HAP-1 (cell line): ENCODE measurements at regions of chr20 and their contacts with region 1.

Region 1: GRCh38 chr20:43187476-43188233 is 2.1 kb downstream of the PTPRT start:
- DNase-seq: peak; percentile 19 to 77
- H3K4me3 ChIP-seq: no peak overlapping the region
- H3K4me1 ChIP-seq: no peaks in the 10 kb centered on the region
- H3K27me3 ChIP-seq: peaks cover 8% of the 10 kb centered on the region; the same call in 1 of the 2 replicates

Region 2: DNA sequence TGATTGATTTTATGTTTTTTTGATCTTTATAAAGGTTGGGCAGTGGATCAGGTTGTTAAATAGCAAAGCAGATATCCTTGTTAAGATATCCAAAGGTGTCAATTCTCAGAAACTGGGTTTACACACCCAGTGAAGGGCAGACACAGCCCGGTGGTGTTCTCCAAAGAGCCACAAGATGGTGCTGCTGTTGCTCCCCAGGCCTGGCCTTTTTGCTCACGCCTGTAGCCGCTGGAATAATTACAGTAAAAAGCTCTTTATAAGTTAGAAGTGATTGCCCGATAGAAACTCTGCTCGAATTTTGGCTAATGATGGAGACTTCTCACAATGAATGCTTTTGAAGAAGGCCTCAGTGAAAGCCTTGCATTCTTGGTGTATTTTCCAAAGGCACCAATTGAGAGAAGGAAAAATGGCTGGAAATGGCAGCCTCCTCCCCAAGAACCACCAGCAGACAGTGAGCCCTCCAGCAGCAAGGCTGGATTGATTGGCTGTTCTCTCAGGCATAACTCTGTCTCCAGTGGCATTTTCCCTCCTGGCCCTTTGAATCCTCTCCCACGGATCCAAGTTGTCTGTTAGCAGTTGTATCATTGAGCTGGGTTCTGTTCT is 1449.0 kb before region 1 on chr20:
- in situ Hi-C with region 1: loop called (anchors 25 kb)
- DNase-seq: peak; percentile 13 to 64
- H3K4me3 ChIP-seq: no peak overlapping the region
- H3K4me1 ChIP-seq: no peaks in the 10 kb centered on the region
- H3K27me3 ChIP-seq: no peaks in the 10 kb centered on the region; the same call in 1 of the 2 replicates

Region 3: GRCh38 chr20:41955999-41956705 is 1231.5 kb before region 1 on chr20:
- in situ Hi-C with region 1: loop called (anchors 25 kb)
- DNase-seq: peak; percentile 30 to 58
- H3K4me3 ChIP-seq: no peak overlapping the region
- H3K4me1 ChIP-seq: no peaks in the 10 kb centered on the region
- H3K27me3 ChIP-seq: no peaks in the 10 kb centered on the region

Region 4: GRCh38 chr20:43650997-43651525 is 463.4 kb after region 1 on chr20:
- in situ Hi-C with region 1: no loop called
- DNase-seq: no peak
- H3K4me3 ChIP-seq: no peak overlapping the region
- H3K4me1 ChIP-seq: no peaks in the 10 kb centered on the region
- H3K27me3 ChIP-seq: no peaks in the 10 kb centered on the region